HCT116 (cell line): ENCODE measurements at regions of chr6 and their contacts with region 1.

Region 1: GRCh38 chr6:35240840-35241801 is 18.4 kb upstream of the ZNF76 start:
- DNase-seq: peak; percentile 38
- ATAC-seq: peak; percentile 99
- H3K4me3 ChIP-seq: no peak overlapping the region
- H3K27ac ChIP-seq: no peak overlapping the region
- H3K4me1 ChIP-seq: no peaks in the 10 kb centered on the region
- H3K27me3 ChIP-seq: no peaks in the 10 kb centered on the region
- CTCF ChIP-seq: peak; percentile 86 to 100 (median 98)
- POLR2A ChIP-seq: no peak
- RAD21 ChIP-seq: peak; percentile 95

Region 2: DNA sequence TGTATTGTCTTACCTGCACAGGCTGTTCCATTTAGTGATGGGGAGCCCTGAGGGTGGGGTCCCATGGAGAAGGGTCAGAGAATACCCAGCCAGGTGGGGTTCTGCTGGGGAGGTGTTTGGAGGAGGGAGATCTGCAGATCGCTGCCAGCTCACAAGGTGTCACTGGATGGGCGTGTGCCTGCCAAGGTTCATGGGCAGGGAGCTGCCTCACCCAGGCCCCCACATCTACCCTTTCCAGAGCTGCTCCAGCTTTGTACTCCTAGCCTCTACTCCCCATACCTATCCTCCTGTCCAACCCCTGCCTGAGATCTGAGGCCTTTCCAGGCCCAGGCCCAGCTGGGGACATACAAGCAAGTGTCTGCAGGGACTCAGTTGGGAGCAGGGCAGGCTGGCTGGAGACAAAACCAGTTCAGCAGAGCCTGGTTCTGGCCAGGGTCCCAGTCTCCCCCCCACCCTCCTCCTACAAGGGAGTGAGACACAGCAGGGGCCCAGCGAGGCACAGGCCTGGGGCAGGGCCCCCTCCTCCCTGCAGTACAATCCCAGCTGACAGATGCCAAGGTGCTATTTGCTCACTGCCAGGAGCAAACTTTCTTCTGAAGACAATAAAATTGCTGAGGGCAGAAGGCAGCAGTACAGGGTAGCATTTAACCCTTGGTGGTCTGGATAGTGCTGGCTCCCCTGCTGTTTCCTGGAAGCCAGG is 704.7 kb before region 1 on chr6:
- CTCF ChIA-PET with region 1: no interaction called
- POLR2A ChIA-PET with region 1: no interaction called
- RAD21 ChIA-PET with region 1: no interaction called
- intact Hi-C with region 1: no loop called
- DNase-seq: no peak
- ATAC-seq: no peak
- H3K4me3 ChIP-seq: no peak overlapping the region
- H3K27ac ChIP-seq: no peak overlapping the region
- H3K4me1 ChIP-seq: peaks cover 3 to 7% of the 10 kb centered on the region in 2 experiments; a peak in 2 of 4 replicates
- H3K27me3 ChIP-seq: no peaks in the 10 kb centered on the region
- CTCF ChIP-seq: no peak
- POLR2A ChIP-seq: no peak
- RAD21 ChIP-seq: no peak

Region 3: GRCh38 chr6:34986845-34987246 is 254.3 kb before region 1 on chr6:
- CTCF ChIA-PET with region 1: interaction called, 6 read pairs
- POLR2A ChIA-PET with region 1: no interaction called
- RAD21 ChIA-PET with region 1: no interaction called
- intact Hi-C with region 1: loop called (anchors 1 kb)
- DNase-seq: peak; percentile 36
- ATAC-seq: peak; percentile 80
- H3K4me3 ChIP-seq: no peak overlapping the region
- H3K27ac ChIP-seq: no peak overlapping the region
- H3K4me1 ChIP-seq: peaks cover 0 to 4% of the 10 kb centered on the region in 2 experiments; a peak in 2 of 4 replicates
- H3K27me3 ChIP-seq: no peaks in the 10 kb centered on the region
- CTCF ChIP-seq: peak; percentile 63 to 93 (median 80); a peak in 5 of 6 replicates
- POLR2A ChIP-seq: no peak
- RAD21 ChIP-seq: peak; percentile 78

Region 4: GRCh38 chr6:35146453-35146852 is 94.7 kb before region 1 on chr6:
- CTCF ChIA-PET with region 1: interaction called, 36 read pairs
- POLR2A ChIA-PET with region 1: no interaction called
- RAD21 ChIA-PET with region 1: interaction called, 10 to 11 read pairs
- intact Hi-C with region 1: loop called (anchors 1 kb)
- DNase-seq: peak; percentile 23
- ATAC-seq: peak; percentile 90
- H3K4me3 ChIP-seq: no peak overlapping the region
- H3K27ac ChIP-seq: no peak overlapping the region
- H3K4me1 ChIP-seq: peaks cover 0 to 10% of the 10 kb centered on the region in 2 experiments; a peak in 2 of 4 replicates
- H3K27me3 ChIP-seq: no peaks in the 10 kb centered on the region
- CTCF ChIP-seq: peak; percentile 69 to 89 (median 81)
- POLR2A ChIP-seq: no peak
- RAD21 ChIP-seq: peak; percentile 94

Region 5: GRCh38 chr6:35230950-35231349 is 10.2 kb before region 1 on chr6:
- CTCF ChIA-PET with region 1: interaction called, 10 read pairs
- POLR2A ChIA-PET with region 1: no interaction called
- RAD21 ChIA-PET with region 1: interaction called in 1 of 2 experiments, 3 read pairs
- intact Hi-C with region 1: no loop called
- DNase-seq: no peak
- ATAC-seq: no peak
- H3K4me3 ChIP-seq: no peak overlapping the region
- H3K27ac ChIP-seq: no peak overlapping the region
- H3K4me1 ChIP-seq: no peaks in the 10 kb centered on the region
- H3K27me3 ChIP-seq: no peaks in the 10 kb centered on the region
- CTCF ChIP-seq: no peak
- POLR2A ChIP-seq: no peak
- RAD21 ChIP-seq: no peak